Aorta (tissue), 5 donors: ENCODE measurements at regions of chr11 and their contacts with region 1.

Region 1: GRCh38 chr11:35182317-35182939 is 43.5 kb downstream of the CD44 start:
- DNase-seq: no peak
- ATAC-seq: no peak
- H3K4me3 ChIP-seq: no peak overlapping the region
- H3K27ac ChIP-seq: no peak overlapping the region
- H3K4me1 ChIP-seq: peaks cover 5 to 20% of the 10 kb centered on the region in 2 donors
- H3K27me3 ChIP-seq: no peaks in the 10 kb centered on the region

Region 2: GRCh38 chr11:35144136-35144741 is 38.2 kb before region 1 on chr11:
- intact Hi-C with region 1: loop called (anchors 5 kb)
- DNase-seq: peak; percentile 56 to 75
- ATAC-seq: no peak
- H3K4me3 ChIP-seq: no peak overlapping the region
- H3K27ac ChIP-seq: peak overlapping the region in 1 of 2 donors; percentile 65
- H3K4me1 ChIP-seq: peaks cover 1 to 15% of the 10 kb centered on the region in 2 donors
- H3K27me3 ChIP-seq: no peaks in the 10 kb centered on the region

Region 3: DNA sequence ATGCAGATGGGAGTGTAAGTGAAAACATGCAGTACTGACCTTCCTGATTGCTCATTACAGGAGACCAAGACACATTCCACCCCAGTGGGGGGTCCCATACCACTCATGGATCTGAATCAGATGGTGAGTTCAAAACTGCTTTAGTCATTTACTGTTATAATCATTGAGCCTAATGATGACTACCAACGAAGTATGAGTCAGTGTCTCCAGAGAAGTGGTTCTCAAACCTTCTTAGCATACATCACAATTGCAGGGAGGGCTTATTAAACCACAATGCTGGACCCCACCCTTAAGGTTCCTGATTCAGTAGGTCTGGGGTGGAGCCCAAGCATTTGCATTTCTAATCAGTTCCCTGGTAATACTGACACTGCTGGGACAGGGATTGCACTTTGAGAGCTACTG is 32.4 kb after region 1 on chr11:
- intact Hi-C with region 1: loop called in 1 of 2 experiments (anchors 5 kb)
- DNase-seq: no peak
- ATAC-seq: no peak
- H3K4me3 ChIP-seq: no peak overlapping the region
- H3K27ac ChIP-seq: peak overlapping the region in 1 of 2 donors; percentile 45
- H3K4me1 ChIP-seq: peaks cover 0 to 4% of the 10 kb centered on the region in 2 donors
- H3K27me3 ChIP-seq: no peaks in the 10 kb centered on the region

Region 4: DNA sequence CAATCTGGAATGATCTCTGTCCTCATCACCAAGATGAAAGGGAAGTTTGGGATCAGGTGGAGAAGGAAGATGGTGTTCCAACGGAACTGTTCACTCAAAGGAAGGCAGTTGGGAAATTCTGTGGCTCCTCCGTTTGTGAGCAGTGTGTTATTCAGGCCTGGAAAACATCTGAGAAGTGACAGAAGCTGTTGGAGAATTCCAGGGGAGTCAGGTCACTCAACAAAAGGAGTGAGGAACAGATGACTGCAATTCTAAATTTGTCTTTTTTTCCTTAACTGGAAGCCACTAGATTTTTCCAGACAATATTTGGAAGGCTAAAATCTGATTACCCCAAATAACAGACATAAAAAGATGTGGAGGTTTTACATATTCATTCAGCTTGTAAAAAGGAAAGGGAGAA is 64.3 kb after region 1 on chr11:
- intact Hi-C with region 1: loop called in 1 of 2 experiments (anchors 5 kb)
- DNase-seq: no peak
- ATAC-seq: peak; percentile 73
- H3K4me3 ChIP-seq: no peak overlapping the region
- H3K27ac ChIP-seq: peak overlapping the region; percentile 98 to 99
- H3K4me1 ChIP-seq: no peaks in the 10 kb centered on the region
- H3K27me3 ChIP-seq: no peaks in the 10 kb centered on the region